Aorta (tissue), 5 donors: ENCODE measurements at regions of chr13 and their contacts with region 1.

Region 1: GRCh38 chr13:76286178-76286577 is 600.0 kb downstream of the KCTD12 start:
- DNase-seq: peak in 1 of 2 donors; percentile 26
- ATAC-seq: peak; percentile 70
- H3K4me3 ChIP-seq: no peak overlapping the region
- H3K27ac ChIP-seq: no peak overlapping the region
- H3K4me1 ChIP-seq: peaks cover 2 to 6% of the 10 kb centered on the region in 2 donors
- H3K27me3 ChIP-seq: no peaks in the 10 kb centered on the region

Region 2: DNA sequence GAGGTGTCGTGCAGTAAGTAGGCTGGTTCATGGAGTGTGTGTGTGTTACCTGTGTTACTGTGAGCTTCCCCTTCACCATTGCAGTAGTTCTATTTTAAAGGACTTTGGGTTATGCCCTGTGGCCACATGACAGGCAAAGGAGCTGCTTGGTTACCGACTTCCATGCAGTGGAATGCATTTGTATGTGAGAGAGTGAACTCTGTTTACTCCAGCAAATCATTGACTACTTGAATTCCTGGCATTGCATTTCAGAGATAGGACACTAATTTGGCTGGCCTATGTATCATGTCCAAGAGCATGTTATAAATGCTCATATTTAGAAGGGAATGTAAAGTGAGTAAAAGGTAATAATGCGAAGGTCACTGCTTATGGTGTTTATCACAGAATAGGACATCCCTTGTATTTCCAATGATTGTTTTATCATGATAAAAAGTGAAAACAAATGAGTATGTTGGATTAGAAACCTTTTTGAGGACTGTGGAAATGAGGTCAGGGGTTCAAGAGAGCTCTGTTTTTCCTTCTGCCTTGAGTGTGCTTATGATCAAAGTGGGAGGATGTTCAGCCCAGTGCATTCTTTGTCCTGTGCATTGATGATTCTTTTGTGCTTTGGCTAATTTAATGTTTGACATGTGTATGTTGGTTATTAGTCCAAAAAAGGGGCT is 493.5 kb before region 1 on chr13:
- intact Hi-C with region 1: loop called in 1 of 2 experiments (anchors 5 kb)
- DNase-seq: no peak
- ATAC-seq: no peak
- H3K4me3 ChIP-seq: no peak overlapping the region
- H3K27ac ChIP-seq: no peak overlapping the region
- H3K4me1 ChIP-seq: peaks cover 0 to 5% of the 10 kb centered on the region in 2 donors
- H3K27me3 ChIP-seq: no peaks in the 10 kb centered on the region